Activated CD8-positive, alpha-beta T cell treated with anti-CD3 and anti-CD28 coated beads, Interleukin-2, amount 10 ng/mL, durations not matched to agents 7 days and 5 days (primary cell): ENCODE measurements at regions of chr9 and their contacts with region 1.

Region 1: GRCh38 chr9:71806901-71807307 is 38.6 kb upstream of the CEMIP2 start:
- DNase-seq: peak; percentile 78
- ATAC-seq: peak; percentile 99
- H3K4me3 Mint-ChIP-seq: no peak overlapping the region
- H3K27ac Mint-ChIP-seq: no peak overlapping the region
- H3K4me1 Mint-ChIP-seq: peaks cover 5% of the 10 kb centered on the region
- H3K27me3 Mint-ChIP-seq: no peaks in the 10 kb centered on the region

Region 2: DNA sequence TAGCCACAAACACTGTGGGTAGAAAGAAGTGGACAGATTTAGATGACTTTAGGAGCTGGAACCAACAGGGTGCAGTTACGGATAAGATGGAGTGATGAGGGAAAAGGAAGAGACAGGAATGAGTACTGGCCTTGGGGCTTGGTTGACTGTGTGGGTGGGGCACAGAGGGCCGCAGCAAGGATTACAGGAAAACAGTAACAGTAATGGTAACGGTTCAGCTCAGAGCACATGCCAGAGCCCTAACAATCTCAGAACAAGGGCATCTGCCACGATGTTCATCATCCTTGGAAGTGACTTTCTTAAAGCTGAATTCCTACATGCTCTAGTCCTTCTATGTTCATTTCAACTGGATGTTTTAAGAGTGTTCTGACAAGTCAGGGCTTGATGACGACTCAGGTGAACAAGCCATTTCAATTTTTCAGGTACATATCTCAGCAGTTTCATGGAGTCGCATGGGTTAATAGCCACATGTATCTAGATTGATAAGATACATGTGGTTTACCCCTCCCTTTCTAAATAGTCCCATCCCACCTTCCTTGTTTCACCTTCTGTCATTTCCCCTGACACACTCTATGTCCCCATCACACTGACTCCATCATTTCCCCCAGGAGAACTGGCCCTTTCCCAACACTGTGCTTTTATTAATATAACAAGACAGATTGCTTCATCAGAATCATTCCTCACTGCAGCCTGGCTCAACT is 103.6 kb before region 1 on chr9:
- CTCF ChIA-PET with region 1: no interaction called
- POLR2A ChIA-PET with region 1: no interaction called
- DNase-seq: no peak
- ATAC-seq: no peak
- H3K4me3 Mint-ChIP-seq: no peak overlapping the region
- H3K27ac Mint-ChIP-seq: peak overlapping the region; percentile 37
- H3K4me1 Mint-ChIP-seq: peaks cover 9% of the 10 kb centered on the region
- H3K27me3 Mint-ChIP-seq: no peaks in the 10 kb centered on the region

Region 3: DNA sequence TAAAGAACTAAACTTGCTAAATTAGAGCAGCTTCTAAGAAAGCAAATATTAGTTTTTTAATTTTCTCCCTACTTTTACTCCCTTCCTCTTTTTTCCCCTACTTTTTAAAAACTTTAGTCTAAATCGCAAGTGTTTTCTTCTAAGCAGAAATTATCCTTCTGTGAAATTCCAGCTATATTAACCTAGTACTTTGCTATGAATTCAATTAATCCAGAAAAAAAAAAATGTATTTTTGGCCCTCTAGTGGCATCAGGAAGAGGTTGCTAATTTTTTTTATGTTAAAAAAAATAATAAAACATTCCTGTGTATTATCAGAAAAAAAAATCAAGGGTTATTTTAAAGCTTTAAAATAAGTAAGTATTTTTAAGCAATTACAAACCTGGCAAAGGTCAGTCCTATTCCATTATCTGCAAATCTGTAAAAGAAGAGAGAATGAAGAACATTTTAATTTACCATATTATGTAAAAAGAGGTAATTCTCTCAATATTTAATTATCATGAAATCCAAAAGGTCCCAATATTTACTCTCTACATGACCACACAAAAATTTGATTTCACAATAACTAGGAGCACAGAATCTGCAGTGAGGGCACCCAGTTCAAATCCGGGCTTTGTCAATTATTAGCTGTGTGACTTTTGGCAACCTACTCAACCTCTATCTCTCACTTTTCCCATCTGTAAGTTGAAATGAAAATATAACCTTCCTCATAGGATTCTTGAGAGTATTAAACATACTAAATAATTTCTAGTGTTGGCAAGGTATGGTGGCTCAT is 90.6 kb before region 1 on chr9:
- CTCF ChIA-PET with region 1: interaction called, 10 read pairs
- POLR2A ChIA-PET with region 1: no interaction called
- DNase-seq: no peak
- ATAC-seq: no peak
- H3K4me3 Mint-ChIP-seq: no peak overlapping the region
- H3K27ac Mint-ChIP-seq: peak overlapping the region; percentile 57
- H3K4me1 Mint-ChIP-seq: no peaks in the 10 kb centered on the region
- H3K27me3 Mint-ChIP-seq: no peaks in the 10 kb centered on the region

Region 4: GRCh38 chr9:71778085-71778484 is 28.8 kb before region 1 on chr9:
- CTCF ChIA-PET with region 1: interaction called, 68 read pairs
- POLR2A ChIA-PET with region 1: interaction called, 3 read pairs
- DNase-seq: no peak
- ATAC-seq: no peak
- H3K4me3 Mint-ChIP-seq: no peak overlapping the region
- H3K27ac Mint-ChIP-seq: no peak overlapping the region
- H3K4me1 Mint-ChIP-seq: peaks cover 50% of the 10 kb centered on the region
- H3K27me3 Mint-ChIP-seq: no peaks in the 10 kb centered on the region

Region 5: GRCh38 chr9:71795097-71795813 is 11.6 kb before region 1 on chr9:
- CTCF ChIA-PET with region 1: interaction called, 48 read pairs
- POLR2A ChIA-PET with region 1: interaction called, 3 read pairs
- DNase-seq: peak; percentile 35
- ATAC-seq: peak; percentile 71
- H3K4me3 Mint-ChIP-seq: peak overlapping the region; percentile 60
- H3K27ac Mint-ChIP-seq: peak overlapping the region; percentile 99
- H3K4me1 Mint-ChIP-seq: peaks cover 42% of the 10 kb centered on the region
- H3K27me3 Mint-ChIP-seq: no peaks in the 10 kb centered on the region

Region 6: GRCh38 chr9:71911253-71912074 is 104.6 kb after region 1 on chr9 and contains the start of gene C9orf85:
- CTCF ChIA-PET with region 1: interaction called, 14 read pairs
- POLR2A ChIA-PET with region 1: interaction called, 4 read pairs
- DNase-seq: peak; percentile 99
- ATAC-seq: peak; percentile 94
- H3K4me3 Mint-ChIP-seq: peak within 1 kb of the TSS; percentile 100
- H3K27ac Mint-ChIP-seq: peak within 1 kb of the TSS; percentile 100
- H3K4me1 Mint-ChIP-seq: peaks cover 55% of the 10 kb centered on the region
- H3K27me3 Mint-ChIP-seq: no peaks in the 10 kb centered on the region
- total RNA-seq, gene C9orf85: 11.1 to 12.0 TPM

Region 7: GRCh38 chr9:71941060-71941568 is 134.2 kb after region 1 on chr9:
- CTCF ChIA-PET with region 1: no interaction called
- POLR2A ChIA-PET with region 1: no interaction called
- DNase-seq: no peak
- ATAC-seq: no peak
- H3K4me3 Mint-ChIP-seq: no peak overlapping the region
- H3K27ac Mint-ChIP-seq: no peak overlapping the region
- H3K4me1 Mint-ChIP-seq: peaks cover 5% of the 10 kb centered on the region
- H3K27me3 Mint-ChIP-seq: no peaks in the 10 kb centered on the region

Region 8: GRCh38 chr9:72271613-72272478 is 464.9 kb after region 1 on chr9:
- CTCF ChIA-PET with region 1: interaction called, 13 read pairs
- POLR2A ChIA-PET with region 1: interaction called, 4 read pairs
- DNase-seq: peak; percentile 68
- ATAC-seq: peak; percentile 65
- H3K4me3 Mint-ChIP-seq: no peak overlapping the region
- H3K27ac Mint-ChIP-seq: no peak overlapping the region
- H3K4me1 Mint-ChIP-seq: no peaks in the 10 kb centered on the region
- H3K27me3 Mint-ChIP-seq: peaks cover 5% of the 10 kb centered on the region